BJ (cell line): ENCODE measurements at regions of chr11 and their contacts with region 1.

Region 1: GRCh38 chr11:66459138-66459778 is 7.4 kb upstream of the PELI3 start:
- DNase-seq: no peak
- H3K4me3 ChIP-seq: no peak overlapping the region
- H3K27me3 ChIP-seq: peaks cover 5% of the 10 kb centered on the region
- CTCF ChIP-seq: no peak

Region 2: GRCh38 chr11:65418711-65419459 is 1040.4 kb before region 1 on chr11:
- CTCF ChIA-PET with region 1: no interaction called
- POLR2A ChIA-PET with region 1: no interaction called
- DNase-seq: peak; percentile 92
- H3K4me3 ChIP-seq: peak overlapping the region; percentile 33
- H3K27me3 ChIP-seq: no peaks in the 10 kb centered on the region
- CTCF ChIP-seq: no peak

Region 3: DNA sequence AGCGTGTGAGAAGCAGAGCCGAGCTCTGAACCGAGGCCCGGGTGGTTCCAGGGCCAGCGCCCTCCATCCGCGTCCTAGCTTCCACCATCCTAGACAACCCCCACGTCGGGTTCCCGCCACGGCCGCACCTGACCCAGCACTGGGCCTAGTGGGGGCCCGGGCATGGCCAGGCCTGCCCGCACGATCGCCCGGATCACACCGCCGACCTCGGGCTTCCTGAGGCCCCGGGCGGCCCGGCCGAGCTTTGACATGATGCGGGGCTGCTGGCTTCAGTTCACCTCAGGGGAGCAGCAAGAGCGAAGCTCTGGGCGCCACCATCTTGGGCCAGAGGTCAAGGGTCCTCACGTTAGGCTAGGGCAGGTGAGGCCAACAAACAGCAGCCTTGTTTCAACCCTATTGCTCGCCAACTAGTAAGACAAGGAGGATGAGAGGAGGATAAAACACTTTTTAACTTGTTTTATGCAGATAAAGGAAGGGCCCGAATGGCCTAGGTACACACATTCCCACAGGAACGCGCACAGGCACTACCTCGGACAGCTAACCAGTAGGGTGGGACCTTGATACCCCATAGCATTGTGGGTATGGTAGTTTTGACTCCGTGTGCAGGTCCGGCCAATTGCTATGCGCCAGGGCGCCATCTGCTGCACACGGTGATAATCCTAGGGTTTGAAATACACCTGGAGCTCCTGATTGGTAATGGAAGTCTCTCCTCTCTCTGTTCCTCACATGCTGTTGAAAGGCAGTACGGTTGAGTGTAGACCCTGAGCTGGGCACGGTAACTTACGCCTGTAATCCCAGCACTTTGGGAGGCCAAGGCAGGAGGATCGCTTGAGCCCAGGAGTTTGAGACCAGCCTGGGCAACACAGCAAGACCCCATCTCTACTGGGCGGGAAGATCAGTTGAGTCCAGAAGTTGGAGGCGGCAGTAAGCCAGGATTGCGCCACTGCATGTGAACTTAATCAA is 20.5 kb before region 1 on chr11 and contains the start of gene MRPL11:
- CTCF ChIA-PET with region 1: interaction called, 14 read pairs
- POLR2A ChIA-PET with region 1: no interaction called
- DNase-seq: peak; percentile 61
- H3K4me3 ChIP-seq: peak within 1 kb of the TSS; percentile 75
- H3K27me3 ChIP-seq: no peaks in the 10 kb centered on the region
- CTCF ChIP-seq: peak; percentile 78
- polyA plus RNA-seq, gene MRPL11: 52.7 and 54.5 TPM in 2 replicates

Region 4: DNA sequence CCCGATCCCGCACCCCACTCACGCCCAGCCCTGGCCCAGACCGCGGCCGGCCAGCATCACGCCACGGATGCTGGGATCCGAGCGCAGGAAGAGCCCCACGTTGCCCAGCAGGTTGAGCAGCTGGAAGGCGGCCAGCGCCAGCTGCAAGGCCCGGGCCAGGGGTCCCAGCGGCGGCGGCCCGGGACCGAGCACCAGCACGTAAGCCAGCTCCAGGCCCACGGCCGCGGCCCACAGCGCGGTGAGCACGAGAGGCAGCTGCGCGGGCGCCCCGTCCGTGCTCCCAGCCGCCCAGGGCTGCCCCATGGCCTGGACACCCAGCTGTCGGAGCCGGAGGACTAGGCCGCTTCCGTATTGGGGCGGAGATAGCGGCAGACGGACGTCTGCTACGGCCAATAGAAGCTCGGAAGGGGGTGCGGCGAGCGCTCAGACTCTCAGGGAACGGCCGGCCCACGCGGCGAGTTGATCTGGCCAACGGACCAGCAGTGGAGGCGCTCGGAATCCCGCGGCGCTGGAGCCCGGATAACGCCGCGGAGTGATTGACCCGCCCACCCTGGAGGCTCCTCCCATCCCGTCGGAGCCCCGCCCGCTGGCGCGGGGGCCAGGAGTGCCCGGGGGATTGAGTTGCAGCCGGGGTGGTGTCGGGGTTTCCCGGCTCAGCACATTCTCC is 86.6 kb after region 1 on chr11 and contains the start of gene ZDHHC24:
- CTCF ChIA-PET with region 1: no interaction called
- POLR2A ChIA-PET with region 1: no interaction called
- DNase-seq: peak; percentile 85
- H3K4me3 ChIP-seq: peak within 1 kb of the TSS; percentile 79
- H3K27me3 ChIP-seq: peaks cover 11% of the 10 kb centered on the region
- CTCF ChIP-seq: no peak
- polyA plus RNA-seq, gene ZDHHC24: 9.1 and 11.9 TPM in 2 replicates

Region 5: DNA sequence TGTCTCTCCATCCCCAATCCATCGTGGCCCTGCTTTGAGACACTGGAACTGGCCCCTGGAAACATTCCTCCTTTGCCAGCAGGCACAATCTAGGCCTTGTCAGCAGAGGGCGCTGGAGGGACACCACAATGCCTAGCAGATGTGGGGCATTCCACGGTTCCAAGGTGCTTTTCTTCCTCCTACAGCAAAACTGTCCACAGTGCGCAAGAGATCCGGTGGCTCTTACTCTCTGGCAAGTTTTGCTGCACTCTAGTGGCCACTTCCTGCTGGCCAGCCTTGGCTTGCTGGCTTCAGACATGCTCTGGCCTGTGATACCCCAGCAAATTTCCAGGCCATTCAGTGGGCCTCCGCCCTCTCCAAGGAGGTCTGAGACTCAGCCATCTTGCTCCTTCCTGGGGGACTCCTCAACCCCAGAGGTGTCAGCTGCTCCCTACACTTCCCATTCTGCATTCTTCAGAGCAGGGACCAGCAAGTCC is 235.5 kb after region 1 on chr11:
- CTCF ChIA-PET with region 1: no interaction called
- POLR2A ChIA-PET with region 1: no interaction called
- DNase-seq: peak; percentile 84
- H3K4me3 ChIP-seq: no peak overlapping the region
- H3K27me3 ChIP-seq: no peaks in the 10 kb centered on the region
- CTCF ChIP-seq: peak; percentile 98